CD8-positive, alpha-beta T cell (primary cell): ENCODE measurements at regions of chr17 and their contacts with region 1.

Region 1: GRCh38 chr17:82418001-82418986 is at the starts of genes HEXD and OGFOD3:
- DNase-seq: peak; percentile 72 to 94 (median 85)
- ATAC-seq: peak; percentile 85
- H3K4me3 ChIP-seq: peak within 1 kb of the TSS; percentile 81 to 88
- H3K4me3 Mint-ChIP-seq: peak within 1 kb of the TSS; percentile 85
- H3K27ac ChIP-seq: peak within 1 kb of the TSS; percentile 63 to 75
- H3K27ac Mint-ChIP-seq: peak within 1 kb of the TSS; percentile 64
- H3K4me1 ChIP-seq: peaks cover 29% of the 10 kb centered on the region
- H3K4me1 Mint-ChIP-seq: peaks cover 29% of the 10 kb centered on the region
- H3K27me3 ChIP-seq: no peaks in the 10 kb centered on the region
- H3K27me3 Mint-ChIP-seq: no peaks in the 10 kb centered on the region
- CTCF ChIP-seq: no peak
- total RNA-seq, gene HEXD: 24.6 to 25.0 TPM
- total RNA-seq, gene OGFOD3: 11.4 to 14.1 TPM

Region 2: GRCh38 chr17:80949451-80950421 is 1468.6 kb before region 1 on chr17:
- CTCF ChIA-PET with region 1: no interaction called
- POLR2A ChIA-PET with region 1: no interaction called
- intact Hi-C with region 1: no loop called
- DNase-seq: peak in 1 of 9 experiments; percentile 16
- ATAC-seq: no peak
- H3K4me3 ChIP-seq: no peak overlapping the region
- H3K4me3 Mint-ChIP-seq: no peak overlapping the region
- H3K27ac ChIP-seq: no peak overlapping the region
- H3K27ac Mint-ChIP-seq: no peak overlapping the region
- H3K4me1 ChIP-seq: no peaks in the 10 kb centered on the region
- H3K4me1 Mint-ChIP-seq: no peaks in the 10 kb centered on the region
- H3K27me3 ChIP-seq: no peaks in the 10 kb centered on the region
- H3K27me3 Mint-ChIP-seq: no peaks in the 10 kb centered on the region
- CTCF ChIP-seq: no peak

Region 3: DNA sequence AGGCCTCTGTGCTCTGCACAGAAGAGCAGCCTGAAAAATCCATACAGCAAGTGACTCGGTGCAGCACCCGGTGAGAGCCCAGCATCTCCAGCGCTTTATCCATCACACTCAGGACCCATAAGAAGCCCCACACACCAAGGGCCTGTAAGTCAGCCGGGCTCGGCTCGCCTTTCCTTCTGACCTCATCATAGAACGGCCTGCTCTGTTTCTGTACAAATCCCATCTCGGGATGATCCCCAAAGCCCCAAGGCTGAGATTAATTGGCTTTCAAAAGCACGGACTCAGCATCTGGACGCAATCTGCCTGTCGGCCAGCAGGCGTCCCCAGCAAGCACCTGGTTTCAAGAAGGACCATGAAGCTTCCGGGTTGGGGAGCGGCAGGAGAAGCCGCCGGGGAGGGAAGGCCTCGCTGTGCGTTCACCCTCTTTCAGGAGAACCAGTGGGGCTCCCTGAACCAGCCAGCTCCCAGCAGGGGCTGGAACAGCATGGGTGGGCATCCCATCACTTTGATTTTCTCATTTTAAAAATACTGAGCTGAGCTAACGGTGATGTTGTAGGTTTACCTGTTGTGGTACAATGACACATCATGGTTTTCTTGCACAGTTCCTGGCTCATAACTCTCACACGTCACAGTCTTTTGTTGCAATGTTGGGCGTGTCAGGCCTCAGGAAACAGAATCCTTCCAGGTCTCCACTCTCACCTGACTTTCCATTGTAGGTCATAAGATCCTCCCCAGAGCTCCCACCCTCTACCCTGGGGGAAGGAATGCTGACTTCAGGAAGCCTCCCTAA is 212.4 kb before region 1 on chr17:
- CTCF ChIA-PET with region 1: no interaction called
- POLR2A ChIA-PET with region 1: no interaction called
- intact Hi-C with region 1: loop called in 1 of 2 experiments (anchors 1 kb)
- DNase-seq: peak; percentile 61 to 91 (median 82)
- ATAC-seq: peak; percentile 83
- H3K4me3 ChIP-seq: no peak overlapping the region
- H3K4me3 Mint-ChIP-seq: peak overlapping the region; percentile 60
- H3K27ac ChIP-seq: peak overlapping the region; percentile 56 to 89
- H3K27ac Mint-ChIP-seq: peak overlapping the region; percentile 96
- H3K4me1 ChIP-seq: peaks cover 24% of the 10 kb centered on the region
- H3K4me1 Mint-ChIP-seq: peaks cover 40% of the 10 kb centered on the region
- H3K27me3 ChIP-seq: no peaks in the 10 kb centered on the region
- H3K27me3 Mint-ChIP-seq: no peaks in the 10 kb centered on the region
- CTCF ChIP-seq: peak; percentile 88

Region 4: GRCh38 chr17:82236142-82236981 is 181.9 kb before region 1 on chr17:
- CTCF ChIA-PET with region 1: interaction called, 3 read pairs
- POLR2A ChIA-PET with region 1: no interaction called
- intact Hi-C with region 1: loop called (anchors 2 to 10 kb)
- DNase-seq: peak in 8 of 9 experiments; percentile 56 to 82 (median 72)
- ATAC-seq: peak; percentile 52
- H3K4me3 ChIP-seq: no peak overlapping the region
- H3K4me3 Mint-ChIP-seq: no peak overlapping the region
- H3K27ac ChIP-seq: peak overlapping the region in 1 of 2 experiments; percentile 6
- H3K27ac Mint-ChIP-seq: peak overlapping the region; percentile 55
- H3K4me1 ChIP-seq: peaks cover 54% of the 10 kb centered on the region
- H3K4me1 Mint-ChIP-seq: peaks cover 40% of the 10 kb centered on the region
- H3K27me3 ChIP-seq: no peaks in the 10 kb centered on the region
- H3K27me3 Mint-ChIP-seq: no peaks in the 10 kb centered on the region
- CTCF ChIP-seq: peak; percentile 82

Region 5: GRCh38 chr17:82450170-82451106 is 32.1 kb after region 1 on chr17 and contains the start of gene CYBC1:
- CTCF ChIA-PET with region 1: interaction called, 4 read pairs
- POLR2A ChIA-PET with region 1: interaction called, 3 read pairs
- intact Hi-C with region 1: loop called (anchors 1 kb)
- DNase-seq: peak; percentile 86 to 97 (median 95)
- ATAC-seq: peak; percentile 65
- H3K4me3 ChIP-seq: peak within 1 kb of the TSS; percentile 57 to 77
- H3K4me3 Mint-ChIP-seq: peak within 1 kb of the TSS; percentile 90
- H3K27ac ChIP-seq: peak within 1 kb of the TSS; percentile 87 to 94
- H3K27ac Mint-ChIP-seq: peak within 1 kb of the TSS; percentile 95
- H3K4me1 ChIP-seq: peaks cover 26% of the 10 kb centered on the region
- H3K4me1 Mint-ChIP-seq: peaks cover 40% of the 10 kb centered on the region
- H3K27me3 ChIP-seq: no peaks in the 10 kb centered on the region
- H3K27me3 Mint-ChIP-seq: no peaks in the 10 kb centered on the region
- CTCF ChIP-seq: no peak
- total RNA-seq, gene CYBC1: 52.9 to 63.9 TPM

Region 6: DNA sequence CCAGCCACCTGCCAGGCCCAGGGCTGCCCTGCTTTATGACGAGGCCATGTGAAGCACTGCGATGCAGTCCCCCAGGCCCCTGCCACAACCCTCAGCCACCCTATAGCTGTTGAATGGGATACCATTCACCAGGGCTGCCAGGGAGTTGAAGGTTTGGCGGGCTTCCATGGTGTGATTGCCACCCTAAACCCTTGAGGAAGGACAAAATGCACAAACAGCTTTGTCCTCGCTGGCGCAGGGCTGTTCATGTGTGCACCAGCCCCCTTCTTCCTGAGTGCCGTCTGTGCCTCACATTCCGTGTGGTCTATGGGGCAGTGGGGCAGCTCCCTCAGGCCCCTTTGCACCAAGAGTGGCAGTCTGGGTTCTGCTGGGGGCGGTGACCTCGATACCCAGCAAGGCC is 65.5 kb after region 1 on chr17:
- CTCF ChIA-PET with region 1: no interaction called
- POLR2A ChIA-PET with region 1: no interaction called
- intact Hi-C with region 1: no loop called
- DNase-seq: no peak
- ATAC-seq: no peak
- H3K4me3 ChIP-seq: no peak overlapping the region
- H3K4me3 Mint-ChIP-seq: no peak overlapping the region
- H3K27ac ChIP-seq: no peak overlapping the region
- H3K27ac Mint-ChIP-seq: no peak overlapping the region
- H3K4me1 ChIP-seq: no peaks in the 10 kb centered on the region
- H3K4me1 Mint-ChIP-seq: peaks cover 10% of the 10 kb centered on the region
- H3K27me3 ChIP-seq: no peaks in the 10 kb centered on the region
- H3K27me3 Mint-ChIP-seq: no peaks in the 10 kb centered on the region
- CTCF ChIP-seq: no peak

Region 7: GRCh38 chr17:82494236-82495055 is 76.2 kb after region 1 on chr17:
- CTCF ChIA-PET with region 1: interaction called, 5 read pairs
- POLR2A ChIA-PET with region 1: no interaction called
- intact Hi-C with region 1: loop called (anchors 1 to 5 kb)
- DNase-seq: peak; percentile 79 to 94 (median 90)
- ATAC-seq: peak; percentile 76
- H3K4me3 ChIP-seq: no peak overlapping the region
- H3K4me3 Mint-ChIP-seq: peak overlapping the region; percentile 68
- H3K27ac ChIP-seq: peak overlapping the region in 1 of 2 experiments; percentile 57
- H3K27ac Mint-ChIP-seq: peak overlapping the region; percentile 80
- H3K4me1 ChIP-seq: peaks cover 19% of the 10 kb centered on the region
- H3K4me1 Mint-ChIP-seq: peaks cover 24% of the 10 kb centered on the region
- H3K27me3 ChIP-seq: no peaks in the 10 kb centered on the region
- H3K27me3 Mint-ChIP-seq: no peaks in the 10 kb centered on the region
- CTCF ChIP-seq: peak; percentile 67

Region 8: DNA sequence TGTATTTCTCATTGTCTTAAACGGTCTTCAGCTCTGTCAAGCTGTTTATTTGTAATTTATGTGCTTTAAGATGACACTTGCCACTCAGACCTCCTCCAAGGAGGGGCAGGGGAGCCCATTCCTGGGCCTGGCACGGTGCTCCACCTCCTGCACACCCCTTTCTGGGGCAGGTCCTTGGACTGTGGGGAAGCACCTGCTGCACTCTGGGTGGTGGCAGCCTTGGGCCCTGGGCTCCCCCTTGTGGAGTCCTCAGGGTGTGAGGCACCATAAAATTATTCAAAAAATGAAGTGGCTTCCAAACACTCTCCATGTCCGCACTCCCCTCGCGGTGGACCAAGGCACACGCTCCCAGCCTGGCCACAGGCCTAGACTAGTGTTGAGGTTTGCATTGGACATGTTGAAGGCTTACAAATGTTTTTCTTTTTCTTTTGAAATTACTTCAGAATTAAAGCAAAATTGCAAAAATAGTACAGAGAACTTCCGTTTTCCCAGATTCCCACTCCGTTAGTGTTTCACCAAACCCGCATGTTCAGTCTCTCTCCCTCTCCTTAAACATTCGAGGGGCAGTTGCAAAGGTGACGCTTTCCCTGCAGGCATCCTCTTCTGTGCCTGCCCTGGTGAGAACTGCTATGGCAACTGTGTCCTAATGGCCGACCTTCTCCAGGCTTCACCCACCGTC is 133.6 kb after region 1 on chr17:
- CTCF ChIA-PET with region 1: interaction called, 4 read pairs
- POLR2A ChIA-PET with region 1: no interaction called
- intact Hi-C with region 1: loop called (anchors 5 to 10 kb)
- DNase-seq: peak; percentile 49 to 85 (median 77)
- ATAC-seq: peak; percentile 98
- H3K4me3 ChIP-seq: no peak overlapping the region
- H3K4me3 Mint-ChIP-seq: no peak overlapping the region
- H3K27ac ChIP-seq: no peak overlapping the region
- H3K27ac Mint-ChIP-seq: no peak overlapping the region
- H3K4me1 ChIP-seq: peaks cover 26% of the 10 kb centered on the region
- H3K4me1 Mint-ChIP-seq: peaks cover 53% of the 10 kb centered on the region
- H3K27me3 ChIP-seq: no peaks in the 10 kb centered on the region
- H3K27me3 Mint-ChIP-seq: no peaks in the 10 kb centered on the region
- CTCF ChIP-seq: peak; percentile 77

Region 9: DNA sequence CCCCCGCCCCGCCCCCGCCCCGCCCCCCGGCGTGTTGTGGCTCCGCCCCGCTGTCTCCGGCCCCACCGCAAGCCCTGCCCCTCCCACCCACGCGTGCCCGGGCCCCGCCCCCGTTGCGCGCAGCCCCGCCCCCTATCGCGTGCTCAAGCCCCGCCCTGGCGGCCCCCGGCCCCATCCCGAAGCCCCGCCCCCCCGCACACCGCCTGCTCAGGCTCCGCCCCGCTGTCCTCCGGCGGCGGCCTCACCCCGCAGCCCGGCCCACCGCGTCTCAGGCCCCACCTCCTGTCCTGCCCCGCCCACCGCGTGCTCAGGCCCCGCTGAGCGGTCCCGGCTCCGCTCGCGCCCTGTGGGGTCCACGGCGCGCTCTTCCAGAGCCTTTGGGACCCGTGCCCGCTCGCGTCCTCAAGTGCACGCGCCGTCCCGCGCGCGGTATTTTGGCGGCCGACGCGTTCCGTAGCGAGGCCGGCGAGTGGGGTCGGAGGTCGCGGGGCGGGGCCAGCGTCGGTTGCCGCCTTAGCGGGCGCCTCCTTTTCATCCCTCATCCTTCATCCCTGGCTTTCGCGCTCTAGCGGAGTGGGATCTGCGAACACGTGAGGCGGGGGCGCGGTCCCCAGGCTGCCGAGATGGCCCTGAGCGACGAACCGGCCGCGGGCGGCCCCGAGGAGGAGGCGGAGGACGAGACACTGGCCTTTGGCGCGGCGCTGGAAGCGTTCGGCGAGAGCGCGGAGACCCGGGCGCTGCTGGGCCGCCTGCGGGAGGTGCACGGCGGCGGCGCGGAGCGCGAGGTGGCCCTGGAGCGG is 333.5 kb after region 1 on chr17 and contains the start of gene TBCD:
- CTCF ChIA-PET with region 1: no interaction called
- POLR2A ChIA-PET with region 1: no interaction called
- intact Hi-C with region 1: loop called in 1 of 2 experiments (anchors 2 kb)
- DNase-seq: peak; percentile 74 to 93 (median 84)
- ATAC-seq: peak; percentile 82
- H3K4me3 ChIP-seq: peak within 1 kb of the TSS; percentile 68 to 90
- H3K4me3 Mint-ChIP-seq: peak within 1 kb of the TSS; percentile 82
- H3K27ac ChIP-seq: peak within 1 kb of the TSS; percentile 25 to 61
- H3K27ac Mint-ChIP-seq: peak within 1 kb of the TSS; percentile 41
- H3K4me1 ChIP-seq: peaks cover 17% of the 10 kb centered on the region
- H3K4me1 Mint-ChIP-seq: peaks cover 28% of the 10 kb centered on the region
- H3K27me3 ChIP-seq: no peaks in the 10 kb centered on the region
- H3K27me3 Mint-ChIP-seq: no peaks in the 10 kb centered on the region
- CTCF ChIP-seq: no peak
- total RNA-seq, gene TBCD: 78.3 to 91.2 TPM